Right ventricle myocardium superior (tissue), 1 donor: ENCODE measurements at regions of chr22 and their contacts with region 1.

Region 1: DNA sequence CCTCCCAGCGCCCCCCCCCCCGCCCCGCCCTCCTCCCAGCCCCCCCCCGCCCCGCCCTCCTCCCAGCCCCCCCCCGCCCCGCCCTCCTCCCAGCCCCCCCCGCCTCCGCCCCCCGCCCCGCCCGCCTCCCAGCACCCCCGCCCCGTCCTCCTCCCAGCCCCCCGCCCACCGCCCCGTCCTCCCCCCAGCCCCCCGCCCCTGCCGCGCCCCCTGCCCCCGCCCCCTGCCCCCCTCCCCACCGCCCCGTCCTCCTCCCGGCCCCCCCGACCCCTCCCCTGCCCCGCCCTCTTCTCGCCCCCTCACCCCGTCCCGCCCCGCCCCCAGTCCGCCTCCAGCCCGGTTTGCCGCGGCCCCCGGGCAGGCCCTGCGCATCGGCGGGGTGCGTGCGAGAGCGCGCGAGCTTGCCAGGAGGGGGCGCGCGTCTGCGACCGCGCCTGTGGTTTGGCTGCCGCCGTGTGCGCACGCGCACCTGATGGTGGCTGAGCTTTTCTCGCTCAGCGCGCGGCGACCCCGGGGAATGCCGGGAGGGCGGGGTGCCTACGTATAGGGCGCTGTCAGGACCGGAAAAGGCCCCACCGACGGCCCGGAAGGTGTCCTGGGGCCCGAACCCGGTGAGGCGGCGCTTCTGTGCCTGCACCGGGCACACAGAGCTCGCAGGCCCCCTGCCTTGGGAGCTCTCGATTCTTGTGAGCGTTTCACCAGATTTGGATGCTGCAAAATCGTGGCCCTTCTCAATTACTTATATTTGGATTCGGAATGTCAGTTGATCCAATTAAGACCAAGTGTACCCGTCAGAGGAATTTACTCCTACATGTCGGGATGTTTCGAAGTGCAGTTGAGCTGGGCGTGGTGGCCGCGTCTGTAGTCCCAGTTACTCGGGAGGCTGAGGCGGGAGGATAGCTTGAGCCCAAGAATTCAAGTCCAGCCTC is 501 bp upstream of the TTLL12 start:
- DNase-seq: peak; percentile 98
- ATAC-seq: peak; percentile 95

Region 2: DNA sequence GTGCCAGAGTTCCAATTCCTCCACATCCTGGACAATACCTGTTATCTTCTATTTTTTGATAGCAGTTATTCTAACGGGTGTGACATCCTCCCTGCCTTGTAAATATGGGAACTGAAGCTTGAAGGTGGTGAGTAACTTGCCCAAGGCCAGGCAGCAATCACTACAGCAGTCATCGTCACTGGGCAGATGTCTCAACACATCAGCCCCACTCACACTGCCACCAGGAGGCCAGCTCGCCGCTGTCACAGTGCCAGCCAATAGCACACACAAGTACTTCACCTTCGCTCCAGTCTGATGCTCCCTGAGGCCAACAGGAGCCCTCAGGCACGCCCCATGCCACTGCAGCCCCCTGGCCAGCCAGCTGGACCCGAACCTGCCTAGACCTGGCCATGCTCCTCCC is 93.4 kb before region 1 on chr22:
- intact Hi-C with region 1: no loop called
- DNase-seq: peak; percentile 80
- ATAC-seq: peak; percentile 63

Region 3: GRCh38 chr22:43151251-43152002 is 36.0 kb before region 1 on chr22 and contains the start of gene TSPO:
- intact Hi-C with region 1: loop called (anchors 2 kb)
- DNase-seq: peak; percentile 91
- ATAC-seq: peak; percentile 89
- total RNA-seq, gene TSPO: 126 TPM